Adrenal gland (tissue), 19 donors: ENCODE measurements at regions of chr2 and their contacts with region 1.

Region 1: DNA sequence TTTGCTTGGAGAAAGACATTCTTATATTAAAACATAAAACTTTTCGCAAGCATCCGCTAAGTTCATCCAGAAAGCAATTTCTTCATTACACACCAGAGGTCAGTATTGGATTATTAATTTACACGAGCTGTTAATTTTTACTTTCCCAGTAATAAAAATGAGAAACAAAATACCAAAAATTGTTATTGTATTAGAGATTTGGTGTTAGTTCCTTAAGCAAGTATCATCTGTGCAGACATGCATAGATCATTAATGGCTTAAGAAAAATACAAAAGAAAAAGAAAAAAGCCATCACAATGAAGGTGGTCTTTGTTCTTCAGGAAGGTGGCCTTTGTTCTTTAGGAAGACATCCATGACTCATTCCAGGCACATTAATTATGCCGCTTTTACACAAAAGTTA is 53.6 kb upstream of the HNMT start:
- DNase-seq: no peak
- H3K4me3 ChIP-seq: no peak overlapping the region
- H3K27ac ChIP-seq: no peak overlapping the region
- H3K4me1 ChIP-seq: no peaks in the 10 kb centered on the region
- H3K27me3 ChIP-seq: no peaks in the 10 kb centered on the region
- CTCF ChIP-seq: peak; percentile 15 to 75 (median 57)
- POLR2A ChIP-seq: no peak

Region 2: DNA sequence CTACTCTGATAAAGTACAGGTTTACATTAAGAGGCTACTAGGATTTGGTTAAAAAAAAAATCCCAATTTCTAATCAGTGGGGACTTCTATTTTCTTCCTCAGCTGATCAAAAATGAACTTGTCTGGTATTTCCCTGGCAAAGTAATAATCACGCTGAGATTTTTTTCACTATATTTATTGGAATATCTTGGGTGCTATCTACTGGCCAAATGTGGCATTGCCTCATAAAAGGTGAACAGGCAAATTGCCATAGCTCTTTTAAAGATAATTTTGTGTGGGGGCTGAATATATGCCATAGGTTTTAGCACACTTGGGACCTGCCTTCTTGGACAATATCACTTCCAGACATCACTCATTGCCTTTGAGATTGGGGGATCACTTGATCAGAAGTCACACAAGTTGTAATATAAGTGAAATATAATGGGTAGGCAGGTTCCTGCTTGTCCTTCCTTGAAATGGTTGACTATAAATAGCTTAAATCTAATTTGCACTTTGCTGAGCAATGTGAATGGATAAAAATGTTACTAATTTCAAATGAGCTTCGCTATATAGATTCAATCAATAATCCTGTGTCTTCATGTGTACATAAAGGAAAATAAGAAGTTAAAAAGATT is 876.5 kb after region 1 on chr2:
- intact Hi-C with region 1: loop called in 1 of 2 experiments (anchors 10 kb)
- DNase-seq: peak in 3 of 7 donors; percentile 35 to 56 (median 41)
- H3K4me3 ChIP-seq: no peak overlapping the region
- H3K27ac ChIP-seq: no peak overlapping the region
- H3K4me1 ChIP-seq: no peaks in the 10 kb centered on the region
- H3K27me3 ChIP-seq: peaks cover 6% of the 10 kb centered on the region
- CTCF ChIP-seq: peak; percentile 49 to 81 (median 78)
- POLR2A ChIP-seq: no peak

Region 3: GRCh38 chr2:138827426-138828054 is 916.9 kb after region 1 on chr2:
- intact Hi-C with region 1: loop called in 1 of 2 experiments (anchors 5 kb)
- DNase-seq: peak in 6 of 7 donors; percentile 8 to 52 (median 16)
- H3K4me3 ChIP-seq: no peak overlapping the region
- H3K27ac ChIP-seq: no peak overlapping the region
- H3K4me1 ChIP-seq: no peaks in the 10 kb centered on the region
- H3K27me3 ChIP-seq: no peaks in the 10 kb centered on the region
- CTCF ChIP-seq: peak; percentile 43 to 76 (median 58)
- POLR2A ChIP-seq: no peak